Adrenal gland (tissue), 19 donors: ENCODE measurements at regions of chr18 and their contacts with region 1.

Region 1: GRCh38 chr18:11149441-11150270 is at the start of gene PIEZO2:
- DNase-seq: peak; percentile 22 to 61 (median 35)
- H3K4me3 ChIP-seq: peak within 1 kb of the TSS in 1 of 4 donors; percentile 47
- H3K27ac ChIP-seq: no peak within 1 kb of the TSS
- H3K4me1 ChIP-seq: peaks cover 0 to 5% of the 10 kb centered on the region in 2 donors
- H3K27me3 ChIP-seq: peaks cover 37% of the 10 kb centered on the region
- CTCF ChIP-seq: no peak
- POLR2A ChIP-seq: no peak
- total RNA-seq, gene PIEZO2: 1.1 to 18.0 (median 3.6) TPM

Region 2: DNA sequence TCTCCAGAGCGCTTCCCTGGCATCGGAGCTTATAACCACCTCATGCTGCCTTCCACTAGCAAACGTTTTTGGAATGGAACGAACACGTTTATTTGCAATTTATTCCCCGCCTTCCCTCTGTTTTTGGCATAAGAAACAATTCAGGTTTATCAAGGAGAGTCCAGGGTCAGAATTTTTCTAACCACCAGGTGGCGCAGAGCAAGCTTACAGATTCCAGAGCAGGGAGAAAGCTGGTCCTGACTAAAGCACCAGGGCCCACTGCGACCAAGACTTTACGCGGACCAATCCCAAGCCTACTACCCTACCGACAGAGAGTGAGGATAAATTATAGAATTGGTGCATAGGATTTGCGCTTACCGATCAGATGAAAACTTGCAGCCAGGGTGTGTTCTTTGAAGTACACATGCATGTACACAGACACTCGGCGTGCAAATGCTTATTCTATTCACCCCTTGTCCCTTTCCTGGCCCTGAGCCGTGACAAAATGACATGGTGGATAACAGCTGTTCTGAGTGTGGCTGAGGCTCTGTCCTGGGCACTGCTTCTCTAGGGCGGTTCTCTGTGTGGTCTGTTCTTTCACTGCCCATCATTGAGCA is 589.1 kb before region 1 on chr18:
- intact Hi-C with region 1: loop called in 1 of 2 experiments (anchors 10 kb)
- DNase-seq: peak; percentile 75 to 93 (median 85)
- H3K4me3 ChIP-seq: no peak overlapping the region
- H3K27ac ChIP-seq: no peak overlapping the region
- H3K4me1 ChIP-seq: no peaks in the 10 kb centered on the region
- H3K27me3 ChIP-seq: no peaks in the 10 kb centered on the region
- CTCF ChIP-seq: peak; percentile 71 to 86 (median 78)
- POLR2A ChIP-seq: no peak

Region 3: GRCh38 chr18:10851824-10852319 is 297.8 kb before region 1 on chr18:
- intact Hi-C with region 1: loop called in 1 of 2 experiments (anchors 5 kb)
- DNase-seq: no peak
- H3K4me3 ChIP-seq: no peak overlapping the region
- H3K27ac ChIP-seq: no peak overlapping the region
- H3K4me1 ChIP-seq: peaks cover 0 to 3% of the 10 kb centered on the region in 2 donors
- H3K27me3 ChIP-seq: no peaks in the 10 kb centered on the region
- CTCF ChIP-seq: peak; percentile 68 to 83 (median 78)
- POLR2A ChIP-seq: no peak

Region 4: GRCh38 chr18:11040823-11041656 is 108.6 kb before region 1 on chr18:
- intact Hi-C with region 1: loop called in 1 of 2 experiments (anchors 10 kb)
- DNase-seq: peak; percentile 25 to 72 (median 65)
- H3K4me3 ChIP-seq: no peak overlapping the region
- H3K27ac ChIP-seq: no peak overlapping the region
- H3K4me1 ChIP-seq: peaks cover 0 to 6% of the 10 kb centered on the region in 2 donors
- H3K27me3 ChIP-seq: no peaks in the 10 kb centered on the region
- CTCF ChIP-seq: peak; percentile 65 to 85 (median 74)
- POLR2A ChIP-seq: no peak

Region 5: DNA sequence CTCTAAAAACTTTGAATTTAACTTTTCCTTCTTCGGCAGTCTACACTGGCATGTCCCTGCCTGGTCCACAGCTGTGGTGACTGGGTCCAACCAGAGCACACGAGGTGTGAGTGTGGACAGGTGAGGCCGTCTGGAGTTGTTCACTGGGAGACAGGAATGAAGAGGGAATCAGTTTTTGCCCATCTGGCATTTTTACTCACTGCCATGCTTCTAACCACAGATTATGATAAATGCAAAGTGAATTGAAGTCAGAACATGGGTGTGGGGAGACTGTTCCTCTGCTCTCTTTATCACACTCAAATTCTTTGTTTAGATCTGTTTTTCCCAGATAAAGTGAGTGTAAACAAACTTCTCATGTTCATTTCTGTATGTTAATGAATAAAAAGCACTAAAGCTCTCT is 54.4 kb after region 1 on chr18:
- intact Hi-C with region 1: no loop called
- DNase-seq: no peak
- H3K4me3 ChIP-seq: no peak overlapping the region
- H3K27ac ChIP-seq: no peak overlapping the region
- H3K4me1 ChIP-seq: no peaks in the 10 kb centered on the region
- H3K27me3 ChIP-seq: no peaks in the 10 kb centered on the region
- CTCF ChIP-seq: no peak
- POLR2A ChIP-seq: no peak